Activated CD4-positive, alpha-beta memory T cell treated with anti-CD3 and anti-CD28 coated beads, Interleukin-2, amount 10 ng/mL, durations not matched to agents 7 days and 5 days (primary cell): ENCODE measurements at regions of chr16 and their contacts with region 1.

Region 1: DNA sequence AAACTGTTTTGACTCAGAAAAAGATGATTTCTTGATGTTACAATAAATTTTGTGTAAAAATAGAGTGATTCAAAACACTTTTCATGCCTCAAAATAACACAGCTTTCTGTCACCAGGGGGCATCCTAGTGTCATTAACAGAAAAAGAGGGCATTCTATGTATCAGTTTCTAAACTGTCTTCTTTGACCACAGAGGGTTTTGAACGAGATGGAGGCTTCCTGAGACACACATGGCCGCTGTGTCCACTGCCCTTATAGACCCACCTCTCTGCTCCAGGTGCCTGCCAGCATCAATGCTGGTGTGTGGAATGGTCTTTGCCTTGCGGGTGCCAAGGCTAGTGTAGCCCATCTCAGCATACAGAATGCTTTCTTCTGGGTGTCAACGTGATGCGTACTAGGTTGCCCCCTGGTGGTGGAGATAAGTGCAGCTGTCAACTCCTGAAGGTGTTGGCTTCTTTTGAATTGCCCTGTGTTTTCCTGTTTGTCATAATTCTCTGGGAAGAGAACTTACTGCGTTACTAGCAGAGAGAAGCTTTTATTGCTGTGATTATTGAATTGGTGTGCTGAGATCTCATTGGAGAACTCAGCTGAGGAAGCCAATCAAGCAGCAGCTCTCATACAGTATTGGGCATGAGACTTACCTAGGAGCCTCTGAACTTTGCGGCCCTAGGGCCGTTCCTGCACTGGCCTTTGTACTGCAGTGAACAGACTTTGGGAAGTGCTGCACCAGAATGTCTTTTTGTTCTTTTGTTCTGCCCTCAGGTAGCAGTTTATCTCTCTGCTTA is 38.6 kb downstream of the USP10 start:
- DNase-seq: peak; percentile 79
- H3K4me3 Mint-ChIP-seq: peak overlapping the region; percentile 46
- H3K27ac Mint-ChIP-seq: peak overlapping the region; percentile 44
- H3K4me1 Mint-ChIP-seq: peaks cover 73% of the 10 kb centered on the region
- H3K27me3 Mint-ChIP-seq: no peaks in the 10 kb centered on the region

Region 2: DNA sequence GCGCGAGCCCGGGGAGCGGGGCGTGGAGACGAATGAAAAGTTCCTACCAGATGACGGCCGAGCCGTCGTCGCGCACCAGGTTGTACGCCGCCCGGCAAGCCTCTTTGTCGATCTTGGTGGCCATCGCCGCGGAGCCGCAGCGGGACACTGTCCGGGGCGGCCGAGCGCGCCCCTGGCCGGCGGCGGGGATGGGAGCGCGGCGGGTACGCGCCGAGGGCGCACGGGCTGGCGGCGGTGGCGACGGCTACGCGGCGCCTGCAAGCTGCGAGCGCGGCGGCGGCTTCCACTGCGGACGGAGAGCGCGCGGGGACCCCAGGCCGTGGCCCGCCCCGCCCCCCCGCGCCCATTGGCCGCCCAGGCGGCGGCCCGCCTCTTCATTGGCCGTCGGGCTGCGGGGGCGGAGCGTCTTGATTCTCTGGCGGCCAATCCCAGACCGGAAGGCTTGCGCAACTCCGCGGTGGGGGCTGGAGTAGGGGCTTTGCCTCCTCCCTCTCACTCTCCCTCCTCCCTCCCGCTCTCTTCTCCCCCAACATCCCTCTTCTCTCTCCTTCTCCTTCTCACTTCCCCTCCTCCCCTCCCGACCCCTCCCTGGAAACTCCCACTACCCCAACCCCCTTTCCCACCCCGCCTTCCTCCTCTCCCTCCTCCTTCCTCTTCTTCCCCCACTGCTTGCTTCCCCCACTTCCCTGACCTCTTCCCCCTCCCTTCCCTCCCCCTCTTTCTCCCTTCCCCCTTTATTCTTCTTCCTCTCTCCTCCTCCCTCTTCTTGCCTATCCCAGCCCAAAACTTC is 120.5 kb before region 1 on chr16 and contains the start of gene COTL1:
- CTCF ChIA-PET with region 1: interaction called, 36 read pairs
- POLR2A ChIA-PET with region 1: no interaction called
- DNase-seq: peak; percentile 95
- H3K4me3 Mint-ChIP-seq: peak within 1 kb of the TSS; percentile 97
- H3K27ac Mint-ChIP-seq: peak within 1 kb of the TSS; percentile 76
- H3K4me1 Mint-ChIP-seq: peaks cover 57% of the 10 kb centered on the region
- H3K27me3 Mint-ChIP-seq: peaks cover 16% of the 10 kb centered on the region
- total RNA-seq, gene COTL1: 676 to 689 TPM

Region 3: GRCh38 chr16:84687715-84688114 is 50.7 kb before region 1 on chr16:
- CTCF ChIA-PET with region 1: interaction called, 10 read pairs
- POLR2A ChIA-PET with region 1: no interaction called
- DNase-seq: no peak
- H3K4me3 Mint-ChIP-seq: no peak overlapping the region
- H3K27ac Mint-ChIP-seq: no peak overlapping the region
- H3K4me1 Mint-ChIP-seq: peaks cover 17% of the 10 kb centered on the region
- H3K27me3 Mint-ChIP-seq: peaks cover 24% of the 10 kb centered on the region

Region 4: DNA sequence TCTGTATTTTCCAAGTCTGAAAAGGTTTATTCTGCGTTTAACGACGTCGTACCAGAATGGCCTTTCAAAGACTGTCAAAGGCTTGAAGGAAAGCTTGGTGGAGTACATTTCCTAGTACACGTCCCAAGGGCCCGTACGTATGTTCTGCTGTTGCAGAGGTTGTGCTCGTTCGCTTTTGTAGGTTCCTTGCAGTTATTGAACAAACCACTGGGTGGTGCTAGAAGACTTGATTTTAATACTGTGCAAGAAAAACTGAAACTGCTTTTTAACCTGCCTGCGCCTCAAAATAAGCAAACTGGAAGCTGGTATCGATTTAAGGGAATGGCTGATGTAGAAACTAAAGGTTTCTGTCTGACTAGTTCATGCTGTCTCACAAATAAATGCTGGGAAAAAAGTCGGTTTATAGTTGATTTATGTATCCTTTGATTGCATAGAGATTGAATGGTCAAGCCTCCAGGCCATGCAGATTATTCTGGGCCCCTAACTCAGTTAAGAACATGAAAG is 16.0 kb after region 1 on chr16:
- CTCF ChIA-PET with region 1: interaction called, 259 read pairs
- POLR2A ChIA-PET with region 1: interaction called, 9 read pairs
- DNase-seq: peak; percentile 75
- H3K4me3 Mint-ChIP-seq: peak overlapping the region; percentile 58
- H3K27ac Mint-ChIP-seq: peak overlapping the region; percentile 53
- H3K4me1 Mint-ChIP-seq: peaks cover 83% of the 10 kb centered on the region
- H3K27me3 Mint-ChIP-seq: no peaks in the 10 kb centered on the region

Region 5: GRCh38 chr16:84970447-84971127 is 232.1 kb after region 1 on chr16:
- CTCF ChIA-PET with region 1: interaction called, 46 read pairs
- POLR2A ChIA-PET with region 1: interaction called, 3 read pairs
- DNase-seq: peak; percentile 81
- H3K4me3 Mint-ChIP-seq: no peak overlapping the region
- H3K27ac Mint-ChIP-seq: no peak overlapping the region
- H3K4me1 Mint-ChIP-seq: peaks cover 4% of the 10 kb centered on the region
- H3K27me3 Mint-ChIP-seq: peaks cover 5% of the 10 kb centered on the region